ENCODE measurements at regions of chr2 and their contacts with region 1.

Region 1: DNA sequence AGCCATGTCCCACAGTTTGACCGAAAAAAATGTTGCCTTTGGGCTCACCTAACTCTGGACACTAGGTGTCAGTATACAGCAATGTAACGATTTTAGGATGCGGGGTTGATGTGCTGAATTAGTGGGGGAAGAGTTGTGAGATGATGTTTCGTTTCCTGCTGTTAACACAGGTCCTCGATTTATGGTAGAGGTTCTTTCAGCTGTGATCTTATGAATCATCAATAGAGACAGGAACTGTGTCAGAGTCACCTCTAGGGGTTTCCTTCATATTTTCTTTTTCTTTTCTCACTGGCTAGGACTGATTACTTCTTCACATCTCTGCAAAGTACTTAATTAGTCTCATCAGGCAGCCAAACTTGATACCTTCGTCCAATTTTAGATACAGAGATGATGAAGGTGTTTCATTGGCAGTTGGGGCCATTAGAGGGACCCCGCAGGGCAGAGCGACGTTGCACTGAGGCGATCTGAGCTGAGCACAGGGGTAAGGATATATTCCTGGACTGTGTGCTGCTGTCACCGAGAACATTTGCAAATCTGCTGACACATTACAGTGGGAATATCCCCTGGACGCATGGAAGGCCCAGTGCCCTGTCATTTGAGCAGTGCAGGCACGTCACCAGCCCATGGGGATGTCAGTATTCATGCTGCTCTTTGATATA is 10.2 kb upstream of the MMADHC start:
- DNase-seq: peak; percentile 46
- H3K4me3 Mint-ChIP-seq: no peak overlapping the region
- H3K27ac Mint-ChIP-seq: no peak overlapping the region
- H3K4me1 Mint-ChIP-seq: peaks cover 27% of the 10 kb centered on the region
- H3K27me3 Mint-ChIP-seq: peaks cover 13% of the 10 kb centered on the region

Region 2: DNA sequence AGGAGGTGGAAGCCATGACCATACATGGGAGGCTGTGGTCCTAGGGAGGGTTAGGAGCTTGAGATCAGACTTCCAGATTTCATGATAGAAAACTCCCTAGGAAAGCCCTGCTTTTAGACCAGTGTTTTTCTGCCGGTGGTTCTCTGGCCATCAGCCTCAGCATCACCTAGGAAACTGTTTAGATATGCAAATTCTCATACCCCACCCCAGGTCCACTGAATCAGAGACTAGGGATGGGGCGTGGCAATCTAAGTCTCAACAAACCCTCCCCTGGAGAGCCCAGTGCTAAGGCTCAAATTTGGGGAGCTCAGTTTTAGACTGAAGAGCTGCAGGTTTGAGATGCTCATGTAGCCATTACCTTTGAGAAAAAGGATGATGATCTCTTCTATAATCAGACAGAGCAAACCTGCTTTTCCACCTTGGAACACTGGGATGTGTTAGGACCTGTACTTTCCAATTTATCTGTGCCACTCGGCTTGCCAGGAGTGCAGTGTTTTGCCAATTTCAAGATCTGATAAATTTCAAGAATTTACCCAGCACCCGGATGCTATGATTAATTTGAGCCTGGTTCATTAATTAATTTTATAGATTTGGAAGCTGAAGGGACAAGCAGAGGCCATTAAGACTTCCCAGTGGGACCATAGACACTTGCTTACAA is 590.8 kb before region 1 on chr2:
- intact Hi-C with region 1: no loop called
- DNase-seq: no peak
- H3K4me3 Mint-ChIP-seq: no peak overlapping the region
- H3K27ac Mint-ChIP-seq: no peak overlapping the region
- H3K4me1 Mint-ChIP-seq: no peaks in the 10 kb centered on the region
- H3K27me3 Mint-ChIP-seq: no peaks in the 10 kb centered on the region

Region 3: DNA sequence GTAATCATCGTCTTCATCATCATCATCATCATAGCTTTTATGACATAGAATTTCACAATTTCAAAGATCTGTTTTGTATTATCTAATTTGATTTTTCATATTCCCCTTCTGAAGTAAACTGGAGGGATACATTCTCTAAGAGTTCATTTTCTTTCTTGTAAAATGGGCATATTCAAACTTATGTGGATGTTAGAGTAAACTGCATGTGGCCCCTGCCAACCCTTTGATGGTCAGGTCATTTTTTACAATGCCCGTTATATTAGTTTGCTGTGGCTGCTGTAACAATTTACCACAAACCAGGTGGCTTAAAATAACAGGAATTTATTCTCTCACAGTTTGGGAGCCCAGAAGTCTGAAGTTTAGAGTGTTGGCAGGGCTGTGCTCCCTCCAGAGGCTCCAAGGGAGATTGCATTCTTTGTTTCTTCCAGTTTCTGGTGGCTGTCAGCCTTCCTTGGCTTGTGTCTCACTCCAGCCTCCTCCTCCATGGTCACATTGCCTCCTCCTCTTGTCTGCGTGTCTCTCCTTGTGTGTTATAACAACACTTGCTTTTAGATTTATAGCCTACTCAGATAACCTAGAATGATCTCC is 117.3 kb after region 1 on chr2:
- intact Hi-C with region 1: loop called (anchors 1 kb)
- DNase-seq: no peak
- H3K4me3 Mint-ChIP-seq: no peak overlapping the region
- H3K27ac Mint-ChIP-seq: no peak overlapping the region
- H3K4me1 Mint-ChIP-seq: no peaks in the 10 kb centered on the region
- H3K27me3 Mint-ChIP-seq: no peaks in the 10 kb centered on the region

Region 4: GRCh38 chr2:150167711-150168110 is 569.9 kb after region 1 on chr2:
- intact Hi-C with region 1: loop called (anchors 10 kb)
- DNase-seq: no peak
- H3K4me3 Mint-ChIP-seq: no peak overlapping the region
- H3K27ac Mint-ChIP-seq: no peak overlapping the region
- H3K4me1 Mint-ChIP-seq: peaks cover 2% of the 10 kb centered on the region
- H3K27me3 Mint-ChIP-seq: no peaks in the 10 kb centered on the region

Region 5: DNA sequence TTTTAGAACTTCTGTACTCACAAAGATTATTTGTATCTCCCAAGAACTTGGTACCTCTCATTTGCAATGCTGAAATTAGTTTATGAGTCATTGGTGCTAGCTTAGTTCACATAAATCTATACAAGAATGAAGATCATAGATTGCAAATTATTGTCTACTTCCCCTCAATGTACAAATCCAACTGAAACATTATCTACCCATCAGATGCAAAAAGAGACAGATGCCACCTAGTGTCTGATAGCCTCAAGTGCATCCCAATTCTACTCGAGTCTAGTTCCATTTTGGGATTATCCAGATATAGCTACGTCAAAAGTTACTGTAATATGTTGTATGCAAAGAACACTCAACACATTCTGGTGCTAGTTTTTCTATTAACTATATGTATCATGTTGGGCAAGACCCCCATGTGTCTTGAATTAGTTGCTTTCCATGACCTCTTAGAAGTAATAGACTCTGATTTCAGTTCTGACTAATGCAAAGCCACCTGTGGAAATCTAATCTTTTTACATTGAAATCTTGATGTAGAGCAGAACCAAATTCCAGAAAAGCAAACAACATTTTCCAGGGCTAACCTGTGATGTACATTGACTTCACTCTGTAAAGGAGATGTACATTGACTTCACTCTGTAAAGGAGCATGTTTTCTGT is 1453.9 kb after region 1 on chr2:
- intact Hi-C with region 1: loop called (anchors 2 kb)
- DNase-seq: no peak
- H3K4me3 Mint-ChIP-seq: no peak overlapping the region
- H3K27ac Mint-ChIP-seq: no peak overlapping the region
- H3K4me1 Mint-ChIP-seq: peaks cover 1% of the 10 kb centered on the region
- H3K27me3 Mint-ChIP-seq: peaks cover 5% of the 10 kb centered on the region

Measured in activated T-helper 2 cell treated with anti-CD3 and anti-CD28 coated beads, Interferon-gamma antibody, Interleukin-2, Interleukin-4, amounts not matched to agents 10 μg/mL and 5 μg/mL and 100 μg/mL, durations not matched to agents 14 hours and 24 hours and 36 hours (primary cell).